ENCODE measurements at regions of chr2 and their contacts with region 1.

Region 1: GRCh38 chr2:18119883-18120282 is 241.4 kb downstream of the KCNS3 start:
- DNase-seq: no peak
- ATAC-seq: no peak

Region 2: DNA sequence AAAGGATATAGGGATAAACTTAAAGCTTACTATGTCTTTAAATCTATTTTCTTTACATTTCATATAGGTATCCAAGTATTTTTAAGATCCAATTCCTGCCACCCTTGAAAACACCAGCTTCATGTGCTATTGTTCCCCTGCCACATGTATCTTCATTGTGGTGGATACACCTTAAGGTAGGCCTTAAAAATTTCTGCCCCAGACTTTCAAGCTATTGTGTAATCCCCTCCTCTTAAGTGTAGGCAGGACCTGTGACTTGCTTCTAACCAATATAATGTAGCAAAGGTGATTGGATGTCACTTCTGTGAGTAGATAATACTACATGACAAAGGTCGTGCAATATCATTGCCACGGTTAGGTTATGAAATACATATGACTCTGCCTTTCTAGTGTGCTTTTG is 721.1 kb before region 1 on chr2:
- intact Hi-C with region 1: loop called (anchors 5 kb)
- DNase-seq: no peak
- ATAC-seq: no peak

Region 3: DNA sequence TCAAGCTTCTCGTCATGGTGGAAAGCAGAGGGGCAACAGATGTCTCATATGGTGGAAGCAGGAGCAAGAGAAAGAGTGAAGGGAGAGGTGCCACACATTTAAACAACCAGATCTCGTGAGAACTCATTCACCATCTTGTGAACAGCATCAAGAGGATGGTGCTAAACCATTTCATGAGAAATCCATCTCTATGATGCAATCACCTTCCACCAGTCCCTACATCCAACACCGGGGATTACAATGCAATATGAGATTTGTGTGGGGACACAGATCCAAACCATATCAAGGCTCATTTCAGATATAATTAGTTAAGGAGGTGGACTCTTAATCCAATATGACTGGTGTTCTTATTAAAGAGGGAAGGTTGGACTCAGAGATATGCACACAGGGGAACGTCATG is 31.4 kb after region 1 on chr2:
- intact Hi-C with region 1: loop called (anchors 1 kb)
- DNase-seq: no peak
- ATAC-seq: no peak